ENCODE measurements at regions of chr5 and their contacts with region 1.

Region 1: DNA sequence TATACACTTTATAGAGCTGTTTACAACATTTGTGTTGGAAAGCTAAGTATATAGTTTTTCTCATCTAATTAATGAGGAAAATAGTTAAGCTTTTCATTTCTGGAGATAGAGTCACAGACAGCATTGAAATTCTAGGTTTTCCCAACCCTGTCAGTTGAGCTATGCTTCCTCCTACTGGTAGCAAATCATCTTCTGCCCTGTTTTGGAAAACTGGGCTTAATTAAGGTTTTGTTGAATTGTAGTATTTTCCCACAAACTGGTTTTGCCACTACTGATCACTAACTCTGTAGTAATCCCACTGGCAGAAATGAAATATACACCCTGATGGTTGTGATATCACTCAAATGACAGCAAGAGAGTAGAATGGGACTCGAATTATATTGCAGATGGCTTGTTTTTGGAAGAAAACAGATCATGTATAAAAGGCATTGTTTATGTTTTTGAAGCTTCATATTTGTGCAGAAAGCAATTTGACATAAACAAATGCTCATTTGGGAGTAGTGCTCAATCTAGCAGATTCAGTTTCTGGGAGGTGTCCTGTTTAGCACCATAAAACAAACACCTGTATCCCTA is 46.6 kb downstream of the CD180 start:
- DNase-seq: no peak
- H3K4me3 Mint-ChIP-seq: no peak overlapping the region
- H3K27ac Mint-ChIP-seq: no peak overlapping the region
- H3K4me1 Mint-ChIP-seq: peaks cover 9% of the 10 kb centered on the region
- H3K27me3 Mint-ChIP-seq: no peaks in the 10 kb centered on the region

Region 2: GRCh38 chr5:66987949-66988838 is 161.8 kb before region 1 on chr5:
- intact Hi-C with region 1: loop called (anchors 1 kb)
- DNase-seq: peak; percentile 58
- H3K4me3 Mint-ChIP-seq: no peak overlapping the region
- H3K27ac Mint-ChIP-seq: no peak overlapping the region
- H3K4me1 Mint-ChIP-seq: peaks cover 4% of the 10 kb centered on the region
- H3K27me3 Mint-ChIP-seq: no peaks in the 10 kb centered on the region

Region 3: GRCh38 chr5:67123819-67124218 is 26.2 kb before region 1 on chr5:
- intact Hi-C with region 1: no loop called
- DNase-seq: peak; percentile 34
- H3K4me3 Mint-ChIP-seq: no peak overlapping the region
- H3K27ac Mint-ChIP-seq: no peak overlapping the region
- H3K4me1 Mint-ChIP-seq: peaks cover 10% of the 10 kb centered on the region
- H3K27me3 Mint-ChIP-seq: no peaks in the 10 kb centered on the region